Dendritic cell treated with granulocyte-macrophage colony-stimulating factor and Interleukin-4, amounts not matched to agents 40 ng/mL and 50 ng/mL, for 4 days (primary cell): ENCODE measurements at regions of chr4 and their contacts with region 1.

Region 1: GRCh38 chr4:89434364-89434988 is 126.9 kb upstream of the GPRIN3 start:
- H3K4me3 Mint-ChIP-seq: no peak overlapping the region
- H3K27ac Mint-ChIP-seq: no peak overlapping the region
- H3K4me1 Mint-ChIP-seq: peaks cover 17% of the 10 kb centered on the region
- H3K27me3 Mint-ChIP-seq: no peaks in the 10 kb centered on the region

Region 2: DNA sequence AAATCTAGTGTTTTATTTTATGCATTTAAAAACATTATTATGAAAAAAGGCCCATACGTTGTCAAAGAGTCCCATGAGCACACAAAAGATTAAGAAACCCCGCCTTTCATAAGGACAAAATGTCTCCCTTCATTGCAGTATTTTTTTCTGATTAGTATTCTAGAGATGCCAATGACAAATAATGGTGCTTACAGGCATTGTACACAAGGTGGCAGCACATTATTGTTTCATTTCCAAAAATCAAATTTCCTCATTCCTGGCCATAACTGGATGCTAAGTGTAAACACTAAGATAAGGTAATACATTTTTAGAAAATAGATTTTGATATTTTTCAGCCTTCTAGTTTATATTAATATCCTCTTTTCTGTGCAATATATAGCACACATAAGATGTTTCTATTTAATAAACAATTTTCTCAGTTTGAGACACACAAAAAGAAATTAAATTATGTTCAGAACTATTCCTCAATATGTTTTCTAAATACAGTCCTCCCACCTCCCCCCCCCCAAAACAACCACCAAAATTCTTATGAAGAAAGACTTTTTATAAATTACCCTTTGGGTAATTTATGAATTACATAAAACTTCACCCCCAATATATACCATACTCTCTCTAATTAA is 275.5 kb before region 1 on chr4:
- intact Hi-C with region 1: loop called (anchors 1 kb)
- H3K4me3 Mint-ChIP-seq: no peak overlapping the region
- H3K27ac Mint-ChIP-seq: no peak overlapping the region
- H3K4me1 Mint-ChIP-seq: no peaks in the 10 kb centered on the region
- H3K27me3 Mint-ChIP-seq: no peaks in the 10 kb centered on the region

Region 3: GRCh38 chr4:89226665-89227574 is 207.6 kb before region 1 on chr4:
- intact Hi-C with region 1: loop called (anchors 1 kb)
- H3K4me3 Mint-ChIP-seq: no peak overlapping the region
- H3K27ac Mint-ChIP-seq: no peak overlapping the region
- H3K4me1 Mint-ChIP-seq: peaks cover 5% of the 10 kb centered on the region
- H3K27me3 Mint-ChIP-seq: no peaks in the 10 kb centered on the region

Region 4: GRCh38 chr4:89254847-89255246 is 179.6 kb before region 1 on chr4:
- intact Hi-C with region 1: loop called (anchors 1 kb)
- H3K4me3 Mint-ChIP-seq: no peak overlapping the region
- H3K27ac Mint-ChIP-seq: no peak overlapping the region
- H3K4me1 Mint-ChIP-seq: peaks cover 7% of the 10 kb centered on the region
- H3K27me3 Mint-ChIP-seq: no peaks in the 10 kb centered on the region

Region 5: GRCh38 chr4:89898304-89898716 is 463.8 kb after region 1 on chr4:
- intact Hi-C with region 1: loop called (anchors 2 kb)
- H3K4me3 Mint-ChIP-seq: no peak overlapping the region
- H3K27ac Mint-ChIP-seq: no peak overlapping the region
- H3K4me1 Mint-ChIP-seq: peaks cover 12% of the 10 kb centered on the region
- H3K27me3 Mint-ChIP-seq: peaks cover 1% of the 10 kb centered on the region